ENCODE measurements at regions of chr6 and their contacts with region 1.

Region 1: GRCh38 chr6:41466434-41466990 is 79.7 kb upstream of the FOXP4 start:
- DNase-seq: no peak
- ATAC-seq: no peak
- H3K4me3 ChIP-seq: no peak overlapping the region
- H3K27ac ChIP-seq: no peak overlapping the region
- H3K4me1 ChIP-seq: peaks cover 8% of the 10 kb centered on the region; the same call in 1 of the 2 replicates
- H3K27me3 ChIP-seq: no peaks in the 10 kb centered on the region; the same call in 1 of the 2 replicates
- CTCF ChIP-seq: no peak

Region 2: DNA sequence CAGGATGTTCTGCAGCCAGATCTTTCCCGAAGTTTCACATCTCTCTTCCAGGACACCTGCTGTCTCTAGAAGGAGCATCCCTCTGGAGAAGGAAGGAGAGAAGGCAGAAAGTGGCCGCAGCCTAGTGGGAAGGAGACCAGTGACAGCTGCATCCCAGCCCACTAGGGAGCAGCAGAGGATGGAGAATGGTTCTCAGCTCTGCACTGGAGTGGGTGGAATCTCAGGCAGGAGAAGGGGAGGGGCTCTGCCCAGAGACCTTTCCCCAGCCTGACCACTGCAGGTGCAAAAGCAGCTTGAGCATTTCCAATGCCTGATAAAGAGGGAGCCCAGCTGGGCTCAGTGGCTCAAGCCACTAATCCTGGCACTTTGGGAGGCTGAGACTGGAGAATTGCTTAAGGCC is 98.8 kb before region 1 on chr6:
- CTCF ChIA-PET with region 1: no interaction called
- POLR2A ChIA-PET with region 1: no interaction called
- intact Hi-C with region 1: no loop called
- DNase-seq: peak; percentile 77
- ATAC-seq: peak; percentile 93
- H3K4me3 ChIP-seq: no peak overlapping the region
- H3K27ac ChIP-seq: no peak overlapping the region
- H3K4me1 ChIP-seq: peaks cover 5% of the 10 kb centered on the region; the same call in 1 of the 2 replicates
- H3K27me3 ChIP-seq: peaks cover 53% of the 10 kb centered on the region
- CTCF ChIP-seq: peak; percentile 87

Region 3: DNA sequence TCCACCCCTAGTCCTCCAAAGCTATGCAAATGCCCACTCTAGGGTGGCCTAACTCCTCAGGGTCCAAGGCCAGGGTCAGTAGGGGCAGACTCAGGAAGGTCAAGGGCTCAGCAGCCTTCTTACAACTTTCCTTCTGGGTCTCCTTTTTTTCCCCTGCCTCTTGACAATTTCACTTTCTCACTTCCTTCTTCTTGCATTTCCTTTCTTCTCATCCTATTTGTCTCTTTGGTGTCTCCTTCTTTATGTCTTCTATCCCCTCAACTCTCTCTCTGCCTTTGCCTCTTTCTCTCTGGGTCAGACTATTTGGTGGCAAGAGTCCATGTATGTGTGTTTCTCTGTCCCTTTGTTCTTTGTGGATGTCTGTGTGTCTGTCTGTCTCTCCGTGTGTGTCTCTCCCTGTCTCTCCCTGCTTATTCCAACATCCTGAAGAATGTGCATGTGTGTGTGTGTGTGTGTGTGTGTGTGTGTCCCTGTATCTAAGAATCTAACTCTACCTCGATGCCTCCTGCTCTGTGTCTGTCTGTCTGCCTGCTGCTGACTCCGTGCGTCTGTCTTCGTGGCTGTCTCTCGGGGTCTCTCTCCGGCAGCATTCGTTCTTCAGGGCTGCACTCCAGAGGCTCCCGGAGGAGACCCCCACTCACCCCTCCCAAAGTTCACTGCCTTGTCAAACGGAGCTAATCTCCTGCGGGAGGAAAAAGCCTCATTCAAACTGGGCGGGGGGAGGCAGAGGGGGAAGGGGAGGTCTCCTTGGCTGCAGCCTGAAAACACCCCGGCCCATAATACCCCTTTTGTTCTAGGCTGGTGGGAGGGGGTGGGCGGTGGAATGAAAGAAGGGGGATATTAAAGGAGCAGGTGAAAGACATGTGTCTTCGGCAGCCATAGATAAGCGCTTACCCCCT is 27.9 kb after region 1 on chr6:
- CTCF ChIA-PET with region 1: interaction called, 3 read pairs
- POLR2A ChIA-PET with region 1: interaction called, 17 read pairs
- intact Hi-C with region 1: no loop called
- DNase-seq: no peak
- ATAC-seq: no peak
- H3K4me3 ChIP-seq: no peak overlapping the region
- H3K27ac ChIP-seq: no peak overlapping the region
- H3K4me1 ChIP-seq: no peaks in the 10 kb centered on the region
- H3K27me3 ChIP-seq: peaks cover 15% of the 10 kb centered on the region
- CTCF ChIP-seq: no peak

Region 4: GRCh38 chr6:41577356-41578216 is 111.1 kb after region 1 on chr6:
- CTCF ChIA-PET with region 1: interaction called, 10 read pairs
- POLR2A ChIA-PET with region 1: no interaction called
- intact Hi-C with region 1: no loop called
- DNase-seq: peak; percentile 89
- ATAC-seq: peak; percentile 75
- H3K4me3 ChIP-seq: peak overlapping the region; percentile 56; the same call in 1 of the 2 replicates
- H3K27ac ChIP-seq: peak overlapping the region; percentile 86
- H3K4me1 ChIP-seq: peaks cover 44% of the 10 kb centered on the region
- H3K27me3 ChIP-seq: no peaks in the 10 kb centered on the region
- CTCF ChIP-seq: no peak

Region 5: DNA sequence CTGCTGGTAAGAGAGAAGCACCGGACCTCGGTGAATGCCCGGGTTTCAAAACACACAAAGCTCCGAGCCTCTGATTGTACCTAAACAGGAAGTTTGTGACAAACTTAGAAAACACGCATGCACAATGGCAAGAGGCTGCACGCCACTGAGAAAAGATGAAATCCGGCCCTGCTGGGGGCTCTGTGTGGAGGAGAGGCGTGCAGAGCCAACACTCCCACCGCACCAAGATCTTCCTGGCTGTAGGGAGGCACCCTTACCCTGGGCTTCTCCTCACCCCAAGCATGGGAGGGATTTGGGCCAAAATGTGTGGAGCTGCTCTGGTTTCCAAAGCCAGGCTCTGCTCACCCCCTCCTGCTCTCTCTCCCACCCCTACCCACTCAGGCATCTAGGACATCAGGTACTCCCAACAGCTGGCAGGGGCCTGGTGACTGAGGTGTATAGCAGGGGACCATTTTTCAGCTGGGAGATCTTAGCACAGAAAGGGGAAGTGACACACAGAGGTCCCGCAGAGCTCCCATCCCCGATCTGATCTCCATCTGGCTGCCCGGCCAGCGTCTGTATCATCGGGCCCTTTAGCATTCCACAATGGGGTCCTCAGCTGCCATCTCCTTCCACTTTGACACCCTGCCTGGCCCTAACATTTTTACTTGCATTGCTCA is 901.0 kb after region 1 on chr6:
- CTCF ChIA-PET with region 1: no interaction called
- POLR2A ChIA-PET with region 1: interaction called, 16 read pairs
- intact Hi-C with region 1: no loop called
- DNase-seq: no peak
- ATAC-seq: no peak
- H3K4me3 ChIP-seq: no peak overlapping the region
- H3K27ac ChIP-seq: no peak overlapping the region
- H3K4me1 ChIP-seq: peaks cover 8% of the 10 kb centered on the region
- H3K27me3 ChIP-seq: no peaks in the 10 kb centered on the region
- CTCF ChIP-seq: no peak

Measured in PC-3 (cell line).